ENCODE measurements at regions of chr22 and their contacts with region 1.

Region 1: DNA sequence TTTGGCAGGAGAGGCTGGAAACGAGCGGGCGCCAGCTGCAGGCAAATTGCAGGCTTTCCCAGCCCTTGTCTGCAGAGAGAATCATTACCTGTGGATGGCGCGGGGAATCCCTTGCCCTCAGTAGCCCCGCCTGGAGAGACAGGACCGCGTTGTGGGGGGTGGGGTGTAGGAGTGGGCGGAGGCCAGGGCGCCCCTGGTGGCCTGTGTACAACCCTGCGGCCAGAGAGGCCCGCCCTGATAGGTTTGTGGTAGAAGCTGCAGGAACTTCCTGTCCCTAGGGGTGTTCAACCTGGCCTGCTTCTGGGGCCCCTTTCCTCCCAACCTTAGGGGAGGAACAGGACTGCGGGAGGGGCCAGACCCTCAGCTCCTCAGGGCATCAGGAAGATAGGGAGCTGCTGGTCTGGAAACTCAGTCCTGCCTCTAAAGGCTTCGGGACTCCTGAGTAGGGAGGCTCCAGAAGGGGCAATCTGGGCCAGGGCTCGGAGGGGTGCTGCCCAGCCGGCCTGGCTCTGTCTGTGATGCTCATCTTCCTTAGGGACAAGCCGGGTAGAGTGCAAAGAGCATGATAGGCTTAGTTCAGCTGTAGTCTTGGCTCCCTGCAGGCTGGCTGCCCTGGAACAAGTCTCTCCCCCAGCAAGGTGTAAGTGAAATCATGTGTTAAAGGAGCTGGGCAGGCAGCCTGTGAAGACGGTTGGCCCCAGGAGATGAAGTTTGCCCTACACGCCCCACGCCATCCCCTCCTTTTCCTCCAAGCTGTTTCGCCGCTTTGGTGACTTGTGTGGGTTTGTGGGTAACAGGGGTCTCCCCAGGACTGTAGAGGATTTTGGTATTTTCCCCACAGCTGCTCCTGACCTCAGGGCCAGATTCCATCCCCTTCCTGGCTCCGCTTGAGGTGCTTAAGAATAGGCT is 24.1 kb upstream of the SUSD2 start:
- DNase-seq: peak; percentile 93
- H3K4me3 Mint-ChIP-seq: peak overlapping the region; percentile 84
- H3K27ac Mint-ChIP-seq: peak overlapping the region; percentile 88
- H3K4me1 Mint-ChIP-seq: peaks cover 58% of the 10 kb centered on the region
- H3K27me3 Mint-ChIP-seq: no peaks in the 10 kb centered on the region

Region 2: DNA sequence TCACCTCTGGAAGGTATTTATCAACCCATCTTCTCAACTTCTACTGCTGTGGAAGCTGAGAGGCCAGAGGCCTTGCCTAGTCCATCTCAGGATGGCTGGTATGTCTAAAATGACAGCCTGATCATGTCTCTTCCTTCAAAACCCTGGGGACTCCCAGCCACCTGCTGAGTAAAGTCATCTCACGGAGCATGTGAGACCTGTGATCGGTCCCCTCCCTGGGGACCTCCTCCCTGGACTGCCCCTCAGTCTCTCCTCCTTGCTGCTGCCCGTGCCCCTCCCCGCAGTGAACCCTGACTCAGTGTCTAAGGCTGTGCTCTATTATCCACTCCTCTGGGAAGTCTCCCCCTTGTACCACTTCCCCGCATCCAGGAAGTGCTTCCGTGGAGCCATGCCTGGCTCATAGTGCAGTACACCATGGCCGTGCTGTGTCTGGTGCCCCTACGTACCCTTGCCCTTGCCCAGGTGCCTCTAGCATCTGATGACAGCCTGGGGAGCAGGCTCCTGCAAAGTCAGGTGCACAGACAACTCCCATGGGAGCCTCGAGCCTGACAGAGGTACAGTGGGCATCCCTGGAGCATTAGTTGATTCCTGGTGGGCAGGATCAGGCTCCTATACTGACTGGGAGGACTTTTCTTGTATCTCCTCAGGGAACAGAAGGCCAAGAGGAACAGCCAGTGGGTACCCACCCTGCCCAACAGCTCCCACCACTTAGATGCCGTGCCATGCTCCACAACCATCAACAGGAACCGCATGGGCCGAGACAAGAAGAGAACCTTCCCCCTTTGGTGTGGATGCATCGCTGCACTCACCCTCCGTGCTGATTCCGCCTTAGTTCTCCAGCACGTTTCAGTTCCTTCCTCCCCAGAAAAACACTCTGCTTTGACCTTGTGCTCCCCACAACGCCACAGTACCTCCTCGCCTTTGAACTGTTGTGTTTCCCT is 356.6 kb before region 1 on chr22:
- CTCF ChIA-PET with region 1: no interaction called
- POLR2A ChIA-PET with region 1: no interaction called
- DNase-seq: no peak
- H3K4me3 Mint-ChIP-seq: no peak overlapping the region
- H3K27ac Mint-ChIP-seq: no peak overlapping the region
- H3K4me1 Mint-ChIP-seq: no peaks in the 10 kb centered on the region
- H3K27me3 Mint-ChIP-seq: no peaks in the 10 kb centered on the region

Region 3: DNA sequence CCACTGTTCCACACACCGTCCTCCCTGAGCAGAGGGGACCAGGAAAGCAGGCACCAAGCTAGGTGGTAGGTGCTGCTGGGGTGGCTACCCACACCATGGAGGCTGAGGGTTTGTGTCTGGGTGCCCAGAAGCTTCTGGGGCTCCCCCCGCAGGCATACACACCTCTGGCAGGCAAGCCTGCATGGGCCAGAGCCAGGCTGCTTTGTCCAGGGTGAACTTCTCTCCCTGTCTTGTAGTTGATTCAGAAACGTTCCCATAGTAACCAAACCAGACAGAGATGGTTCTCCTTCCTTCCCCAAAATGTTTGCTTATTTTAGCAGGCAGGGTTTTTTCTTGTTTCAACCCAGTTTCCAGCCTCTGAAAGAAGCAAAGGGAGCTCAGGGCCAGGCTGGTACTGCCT is 16.8 kb before region 1 on chr22:
- CTCF ChIA-PET with region 1: interaction called, 41 read pairs
- POLR2A ChIA-PET with region 1: no interaction called
- DNase-seq: no peak
- H3K4me3 Mint-ChIP-seq: no peak overlapping the region
- H3K27ac Mint-ChIP-seq: peak overlapping the region; percentile 75
- H3K4me1 Mint-ChIP-seq: peaks cover 52% of the 10 kb centered on the region
- H3K27me3 Mint-ChIP-seq: no peaks in the 10 kb centered on the region

Region 4: DNA sequence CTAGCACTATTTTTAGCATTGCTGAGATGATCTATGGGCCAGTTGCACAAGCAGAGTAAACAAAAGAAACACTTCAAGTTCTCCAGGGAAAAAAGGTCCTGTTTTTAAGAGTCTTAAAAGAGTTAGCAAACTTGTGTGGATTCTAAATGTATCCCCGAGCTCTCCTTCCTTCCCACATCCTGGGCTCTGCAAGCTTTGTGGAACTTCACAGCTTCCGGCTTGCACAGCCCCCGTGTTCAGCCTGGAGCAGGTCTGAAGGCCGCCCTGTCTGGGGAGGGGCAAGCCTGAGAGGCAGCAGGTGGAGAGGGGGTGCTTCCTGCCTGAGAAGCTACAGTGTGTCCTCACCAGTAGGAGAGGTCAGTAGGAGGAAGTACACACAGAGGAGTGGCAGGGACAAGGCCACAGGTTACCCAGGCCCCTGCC is 11.0 kb before region 1 on chr22:
- CTCF ChIA-PET with region 1: interaction called, 41 read pairs
- POLR2A ChIA-PET with region 1: no interaction called
- DNase-seq: peak; percentile 49
- H3K4me3 Mint-ChIP-seq: peak overlapping the region; percentile 23
- H3K27ac Mint-ChIP-seq: peak overlapping the region; percentile 77
- H3K4me1 Mint-ChIP-seq: peaks cover 61% of the 10 kb centered on the region
- H3K27me3 Mint-ChIP-seq: no peaks in the 10 kb centered on the region

Region 5: DNA sequence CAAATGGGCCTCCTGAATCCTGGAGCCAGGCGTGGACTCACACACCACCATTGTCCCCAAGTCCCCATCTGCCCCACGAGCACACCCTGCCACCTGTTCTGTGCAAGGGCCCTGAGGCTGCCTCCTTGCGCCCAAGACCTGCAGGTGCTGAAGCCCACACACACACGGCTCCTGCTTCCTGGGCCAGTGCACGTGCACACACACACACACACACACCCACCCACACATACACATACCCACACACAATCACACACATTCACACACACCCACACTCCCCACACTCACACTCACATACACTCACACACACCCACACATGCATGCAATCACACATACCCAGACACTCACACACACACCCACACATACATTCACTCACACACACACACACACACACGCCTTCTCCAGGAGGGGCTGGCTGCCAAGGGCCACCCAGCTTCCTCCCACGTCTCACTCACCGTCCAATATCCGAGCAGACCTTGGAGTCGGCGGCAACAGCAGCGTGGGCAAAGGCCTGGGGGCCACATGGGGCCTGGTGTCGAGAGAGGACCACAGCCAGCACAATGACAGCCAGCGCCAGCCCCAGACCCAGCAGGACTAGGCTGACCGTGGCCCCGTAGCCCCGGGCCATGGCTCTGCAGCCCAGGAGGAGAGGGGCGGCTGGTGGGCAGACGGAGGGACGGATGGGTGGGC is 87.1 kb after region 1 on chr22:
- CTCF ChIA-PET with region 1: interaction called, 11 read pairs
- POLR2A ChIA-PET with region 1: no interaction called
- DNase-seq: no peak
- H3K4me3 Mint-ChIP-seq: no peak overlapping the region
- H3K27ac Mint-ChIP-seq: peak overlapping the region; percentile 72
- H3K4me1 Mint-ChIP-seq: peaks cover 44% of the 10 kb centered on the region
- H3K27me3 Mint-ChIP-seq: no peaks in the 10 kb centered on the region

Region 6: DNA sequence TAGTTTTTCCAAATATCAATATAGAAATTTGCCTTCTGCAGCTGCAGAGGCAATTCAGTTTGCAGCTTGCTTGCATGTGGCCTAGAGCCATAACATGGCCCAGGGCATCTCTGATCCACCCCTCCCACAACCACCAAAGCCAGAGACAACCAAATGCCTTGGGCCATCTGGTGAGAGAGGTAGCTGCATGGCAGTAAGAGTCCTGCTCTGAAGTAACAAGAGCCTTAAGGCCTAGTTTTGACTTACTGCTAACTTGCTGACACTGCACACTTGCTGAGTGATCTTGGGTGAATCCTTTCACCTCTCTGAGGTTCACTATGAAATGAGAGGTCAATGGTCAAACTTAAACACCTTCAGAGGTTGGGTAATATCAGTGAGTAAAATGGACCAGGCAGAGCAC is 108.6 kb after region 1 on chr22:
- CTCF ChIA-PET with region 1: no interaction called
- POLR2A ChIA-PET with region 1: no interaction called
- DNase-seq: no peak
- H3K4me3 Mint-ChIP-seq: no peak overlapping the region
- H3K27ac Mint-ChIP-seq: no peak overlapping the region
- H3K4me1 Mint-ChIP-seq: peaks cover 7% of the 10 kb centered on the region
- H3K27me3 Mint-ChIP-seq: no peaks in the 10 kb centered on the region

Region 7: DNA sequence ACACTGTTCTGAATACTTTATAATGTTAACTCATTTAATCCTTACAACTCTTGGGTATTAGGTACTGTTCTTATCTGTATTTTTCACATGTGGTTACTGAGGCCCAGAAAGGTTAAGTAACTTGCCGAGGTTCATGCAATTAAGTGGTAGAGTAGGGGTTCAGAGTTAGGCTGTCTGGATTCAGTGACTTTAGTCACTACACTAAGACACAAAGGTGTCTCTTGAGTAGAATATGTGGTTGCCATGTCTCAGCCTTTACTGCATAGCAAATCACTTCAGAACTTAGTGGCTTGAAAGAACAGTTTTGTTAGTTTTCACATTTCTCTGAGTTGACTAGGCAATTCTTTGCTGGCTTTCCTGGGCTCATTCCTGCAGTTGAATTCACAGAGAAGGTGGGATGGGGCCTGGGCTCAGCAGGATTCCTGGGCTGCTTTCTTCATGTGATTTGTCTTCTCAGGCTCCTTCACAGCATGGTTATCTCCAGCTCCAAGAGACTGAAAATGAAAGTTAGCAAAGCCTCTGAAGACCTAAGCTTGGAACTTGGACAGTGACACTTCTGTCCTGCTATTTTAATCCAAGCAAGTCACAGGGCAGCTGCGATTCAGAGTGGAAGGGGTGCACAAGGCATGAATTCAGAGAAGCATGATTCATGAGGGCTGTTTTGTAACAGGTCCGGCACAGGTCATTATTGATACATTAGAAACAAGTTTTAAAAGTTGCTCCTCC is 181.7 kb after region 1 on chr22:
- CTCF ChIA-PET with region 1: no interaction called
- POLR2A ChIA-PET with region 1: no interaction called
- DNase-seq: no peak
- H3K4me3 Mint-ChIP-seq: no peak overlapping the region
- H3K27ac Mint-ChIP-seq: no peak overlapping the region
- H3K4me1 Mint-ChIP-seq: peaks cover 15% of the 10 kb centered on the region
- H3K27me3 Mint-ChIP-seq: no peaks in the 10 kb centered on the region